ENCODE measurements at regions of chr5 and their contacts with region 1.

Region 1: GRCh38 chr5:87121304-87122150 is 146.2 kb upstream of the RASA1 start:
- DNase-seq: peak in 8 of 9 donors; percentile 2 to 38 (median 28)
- ATAC-seq: peak; percentile 86
- H3K4me3 ChIP-seq: peak overlapping the region; percentile 24
- H3K4me3 Mint-ChIP-seq: peak overlapping the region; percentile 52 to 69 (median 64)
- H3K27ac ChIP-seq: no peak overlapping the region
- H3K27ac Mint-ChIP-seq: peak overlapping the region; percentile 15 to 89 (median 71)
- H3K4me1 ChIP-seq: peaks cover 22 to 38% of the 10 kb centered on the region in 2 donors
- H3K4me1 Mint-ChIP-seq: peaks cover 25 to 50% (median 38%) of the 10 kb centered on the region in 7 donors
- H3K27me3 ChIP-seq: no peaks in the 10 kb centered on the region
- H3K27me3 Mint-ChIP-seq: no peaks in the 10 kb centered on the region

Region 2: GRCh38 chr5:86500947-86501346 is 620.6 kb before region 1 on chr5:
- CTCF ChIA-PET with region 1: no interaction called
- POLR2A ChIA-PET with region 1: no interaction called
- intact Hi-C with region 1: no loop called
- DNase-seq: no peak
- ATAC-seq: no peak
- H3K4me3 ChIP-seq: no peak overlapping the region
- H3K4me3 Mint-ChIP-seq: no peak overlapping the region
- H3K27ac ChIP-seq: no peak overlapping the region
- H3K27ac Mint-ChIP-seq: no peak overlapping the region
- H3K4me1 ChIP-seq: no peaks in the 10 kb centered on the region
- H3K4me1 Mint-ChIP-seq: no peaks in the 10 kb centered on the region
- H3K27me3 ChIP-seq: no peaks in the 10 kb centered on the region
- H3K27me3 Mint-ChIP-seq: peaks cover 0 to 7% (median 2%) of the 10 kb centered on the region in 5 donors

Region 3: DNA sequence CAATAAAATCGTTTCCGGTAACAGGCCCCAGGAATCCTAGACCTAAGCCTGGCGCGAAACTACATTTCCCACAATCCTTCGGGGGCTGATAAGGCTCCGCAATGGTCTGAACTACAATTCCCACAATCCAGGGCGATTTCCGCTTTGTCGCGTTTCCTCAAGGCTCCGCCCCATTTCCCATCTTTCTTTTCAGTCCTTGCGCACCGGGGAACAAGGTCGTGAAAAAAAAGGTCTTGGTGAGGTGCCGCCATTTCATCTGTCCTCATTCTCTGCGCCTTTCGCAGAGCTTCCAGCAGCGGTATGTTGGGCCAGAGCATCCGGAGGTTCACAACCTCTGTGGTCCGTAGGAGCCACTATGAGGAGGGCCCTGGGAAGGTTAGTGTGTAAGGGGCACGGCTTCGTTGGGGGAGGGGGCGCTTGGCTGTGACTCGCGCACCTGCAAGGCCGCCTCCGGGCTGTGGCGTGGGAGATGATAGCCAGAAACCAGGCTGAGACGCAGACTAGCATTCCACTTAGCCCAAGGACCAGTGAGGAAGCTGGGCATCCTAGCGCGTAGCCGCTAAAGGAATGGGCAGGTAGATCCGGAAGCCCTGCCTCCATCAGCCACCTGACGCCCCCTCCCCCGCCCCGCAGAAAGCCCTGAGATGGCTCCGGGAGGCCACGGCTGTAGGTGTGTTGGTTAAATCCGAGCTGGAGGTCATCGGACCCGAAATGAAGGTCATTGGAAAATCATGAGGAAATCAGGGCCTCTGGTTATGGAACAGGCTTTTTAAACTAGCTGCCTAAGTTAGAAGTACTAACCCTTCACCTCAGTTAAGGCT is 503.6 kb before region 1 on chr5 and contains the start of gene COX7C:
- CTCF ChIA-PET with region 1: no interaction called
- POLR2A ChIA-PET with region 1: no interaction called
- intact Hi-C with region 1: loop called in 1 of 2 experiments (anchors 5 kb)
- DNase-seq: peak; percentile 67 to 97 (median 96)
- ATAC-seq: peak; percentile 97
- H3K4me3 ChIP-seq: peak within 1 kb of the TSS; percentile 95
- H3K4me3 Mint-ChIP-seq: peak within 1 kb of the TSS; percentile 96 to 100 (median 100)
- H3K27ac ChIP-seq: peak within 1 kb of the TSS; percentile 96
- H3K27ac Mint-ChIP-seq: peak within 1 kb of the TSS; percentile 98 to 100 (median 100)
- H3K4me1 ChIP-seq: peaks cover 7 to 12% of the 10 kb centered on the region in 2 donors
- H3K4me1 Mint-ChIP-seq: peaks cover 5 to 46% (median 32%) of the 10 kb centered on the region in 7 donors
- H3K27me3 ChIP-seq: no peaks in the 10 kb centered on the region
- H3K27me3 Mint-ChIP-seq: peaks cover 8 to 14% (median 9%) of the 10 kb centered on the region in 5 donors
- total RNA-seq, gene COX7C: 393 to 571 (median 547) TPM

Region 4: GRCh38 chr5:87069974-87070624 is 51.4 kb before region 1 on chr5:
- CTCF ChIA-PET with region 1: no interaction called
- POLR2A ChIA-PET with region 1: interaction called, 3 read pairs
- intact Hi-C with region 1: loop called in 1 of 2 experiments (anchors 1 kb)
- DNase-seq: no peak
- ATAC-seq: no peak
- H3K4me3 ChIP-seq: no peak overlapping the region
- H3K4me3 Mint-ChIP-seq: no peak overlapping the region
- H3K27ac ChIP-seq: no peak overlapping the region
- H3K27ac Mint-ChIP-seq: peak overlapping the region in 2 of 9 donors; percentile 15 to 38
- H3K4me1 ChIP-seq: peaks cover 7 to 24% of the 10 kb centered on the region in 2 donors
- H3K4me1 Mint-ChIP-seq: peaks cover 10 to 27% (median 20%) of the 10 kb centered on the region in 7 donors
- H3K27me3 ChIP-seq: no peaks in the 10 kb centered on the region
- H3K27me3 Mint-ChIP-seq: no peaks in the 10 kb centered on the region

Region 5: DNA sequence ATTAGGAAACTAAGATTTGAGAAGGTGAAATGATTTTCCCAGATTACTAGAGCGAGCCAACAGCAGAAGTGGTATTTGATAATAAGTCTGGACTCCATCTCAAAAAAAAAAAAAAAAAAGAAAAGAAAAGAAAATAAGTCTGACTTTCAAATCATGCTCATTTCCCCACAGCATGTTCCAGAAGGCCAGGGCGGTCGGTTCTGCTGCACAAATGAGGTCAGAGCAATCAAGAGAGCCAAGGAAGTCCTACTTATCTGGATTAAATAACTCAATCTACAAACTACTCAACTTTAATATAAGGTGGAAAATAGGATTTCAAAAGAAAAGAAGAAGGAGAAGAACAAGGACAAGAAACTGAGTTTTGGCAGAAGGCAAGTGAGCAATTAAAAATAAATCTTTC is 15.8 kb after region 1 on chr5:
- CTCF ChIA-PET with region 1: interaction called, 3 read pairs
- POLR2A ChIA-PET with region 1: interaction called, 5 read pairs
- intact Hi-C with region 1: loop called in 1 of 2 experiments (anchors 1 kb)
- DNase-seq: no peak
- ATAC-seq: no peak
- H3K4me3 ChIP-seq: no peak overlapping the region
- H3K4me3 Mint-ChIP-seq: no peak overlapping the region
- H3K27ac ChIP-seq: no peak overlapping the region
- H3K27ac Mint-ChIP-seq: peak overlapping the region in 1 of 9 donors; percentile 16
- H3K4me1 ChIP-seq: no peaks in the 10 kb centered on the region
- H3K4me1 Mint-ChIP-seq: peaks cover 0 to 2% (median 0%) of the 10 kb centered on the region in 7 donors
- H3K27me3 ChIP-seq: no peaks in the 10 kb centered on the region
- H3K27me3 Mint-ChIP-seq: peaks cover 0 to 3% (median 0%) of the 10 kb centered on the region in 5 donors

Region 6: GRCh38 chr5:87190687-87191086 is 69.2 kb after region 1 on chr5:
- CTCF ChIA-PET with region 1: no interaction called
- POLR2A ChIA-PET with region 1: no interaction called
- intact Hi-C with region 1: loop called in 1 of 2 experiments (anchors 5 kb)
- DNase-seq: no peak
- ATAC-seq: no peak
- H3K4me3 ChIP-seq: no peak overlapping the region
- H3K4me3 Mint-ChIP-seq: no peak overlapping the region
- H3K27ac ChIP-seq: no peak overlapping the region
- H3K27ac Mint-ChIP-seq: no peak overlapping the region
- H3K4me1 ChIP-seq: peaks cover 4 to 5% of the 10 kb centered on the region in 2 donors
- H3K4me1 Mint-ChIP-seq: peaks cover 8 to 30% (median 17%) of the 10 kb centered on the region in 7 donors
- H3K27me3 ChIP-seq: no peaks in the 10 kb centered on the region
- H3K27me3 Mint-ChIP-seq: no peaks in the 10 kb centered on the region

Region 7: GRCh38 chr5:87393331-87393730 is 271.8 kb after region 1 on chr5:
- CTCF ChIA-PET with region 1: interaction called, 3 read pairs
- POLR2A ChIA-PET with region 1: no interaction called
- intact Hi-C with region 1: loop called in 1 of 2 experiments (anchors 5 kb)
- DNase-seq: no peak
- ATAC-seq: no peak
- H3K4me3 ChIP-seq: no peak overlapping the region
- H3K4me3 Mint-ChIP-seq: no peak overlapping the region
- H3K27ac ChIP-seq: no peak overlapping the region
- H3K27ac Mint-ChIP-seq: peak overlapping the region in 3 of 9 donors; percentile 33 to 74 (median 36)
- H3K4me1 ChIP-seq: no peaks in the 10 kb centered on the region
- H3K4me1 Mint-ChIP-seq: peaks cover 6 to 34% (median 20%) of the 10 kb centered on the region in 7 donors
- H3K27me3 ChIP-seq: no peaks in the 10 kb centered on the region
- H3K27me3 Mint-ChIP-seq: no peaks in the 10 kb centered on the region

Region 8: DNA sequence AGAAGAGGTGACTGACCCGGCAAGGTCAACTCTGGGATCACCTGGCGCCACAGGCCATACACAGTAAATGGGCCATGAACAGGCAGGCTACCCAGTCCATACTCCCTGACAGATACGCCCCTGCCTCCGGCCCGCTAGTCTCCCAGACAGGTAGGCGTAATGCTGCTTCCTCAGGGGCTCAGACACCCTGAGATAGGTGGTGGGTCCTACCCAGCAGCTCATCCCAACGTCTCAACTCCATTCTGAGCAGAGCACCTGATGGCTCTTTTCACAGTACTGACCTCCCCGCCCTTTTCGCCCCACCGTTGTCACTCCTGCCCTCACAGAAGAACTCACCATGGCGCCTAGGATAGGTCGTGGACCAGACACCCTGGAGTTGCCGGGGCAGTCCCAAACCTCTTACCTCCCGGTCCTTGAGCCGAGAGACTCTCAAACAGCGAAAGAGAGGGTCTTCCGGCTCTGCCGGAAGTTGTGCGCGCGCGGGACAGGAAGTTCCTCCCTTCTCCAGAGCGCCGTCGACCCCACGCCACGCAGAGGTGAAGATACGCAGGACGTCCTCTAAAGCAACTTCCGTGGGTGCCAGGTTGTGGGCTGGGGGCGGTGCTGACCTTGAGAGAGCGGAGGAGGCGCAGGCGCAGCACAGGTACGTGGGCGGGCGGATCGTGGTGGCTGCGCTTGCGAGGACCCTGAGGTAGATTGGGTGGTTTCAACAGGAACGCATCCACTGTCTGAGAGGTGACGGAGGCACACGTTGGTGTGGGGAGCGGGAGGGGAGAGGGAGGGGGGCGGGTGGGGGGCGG is 1147.1 kb after region 1 on chr5 and contains the start of gene TMEM161B:
- CTCF ChIA-PET with region 1: no interaction called
- POLR2A ChIA-PET with region 1: no interaction called
- intact Hi-C with region 1: loop called in 1 of 2 experiments (anchors 10 kb)
- DNase-seq: peak; percentile 81 to 97 (median 95)
- ATAC-seq: peak; percentile 98
- H3K4me3 ChIP-seq: peak within 1 kb of the TSS; percentile 99
- H3K4me3 Mint-ChIP-seq: peak within 1 kb of the TSS; percentile 99 to 100 (median 99)
- H3K27ac ChIP-seq: peak within 1 kb of the TSS; percentile 97
- H3K27ac Mint-ChIP-seq: peak within 1 kb of the TSS; percentile 94 to 100 (median 97)
- H3K4me1 ChIP-seq: peaks cover 11 to 21% of the 10 kb centered on the region in 2 donors
- H3K4me1 Mint-ChIP-seq: peaks cover 24 to 81% (median 71%) of the 10 kb centered on the region in 7 donors
- H3K27me3 ChIP-seq: no peaks in the 10 kb centered on the region
- H3K27me3 Mint-ChIP-seq: no peaks in the 10 kb centered on the region
- total RNA-seq, gene TMEM161B: 21.1 to 39.7 (median 28.4) TPM